ENCODE measurements at regions of chr2 and their contacts with region 1.

Region 1: GRCh38 chr2:30336978-30337841 is 105.9 kb downstream of the LBH start:
- DNase-seq: peak; percentile 87
- CTCF ChIP-seq: no peak

Region 2: GRCh38 chr2:30325600-30326328 is 11.4 kb before region 1 on chr2:
- CTCF ChIA-PET with region 1: interaction called, 15 read pairs
- POLR2A ChIA-PET with region 1: interaction called, 9 read pairs
- DNase-seq: no peak
- CTCF ChIP-seq: no peak

Region 3: GRCh38 chr2:30398084-30398873 is 61.1 kb after region 1 on chr2:
- CTCF ChIA-PET with region 1: no interaction called
- POLR2A ChIA-PET with region 1: no interaction called
- DNase-seq: no peak
- CTCF ChIP-seq: no peak

Region 4: DNA sequence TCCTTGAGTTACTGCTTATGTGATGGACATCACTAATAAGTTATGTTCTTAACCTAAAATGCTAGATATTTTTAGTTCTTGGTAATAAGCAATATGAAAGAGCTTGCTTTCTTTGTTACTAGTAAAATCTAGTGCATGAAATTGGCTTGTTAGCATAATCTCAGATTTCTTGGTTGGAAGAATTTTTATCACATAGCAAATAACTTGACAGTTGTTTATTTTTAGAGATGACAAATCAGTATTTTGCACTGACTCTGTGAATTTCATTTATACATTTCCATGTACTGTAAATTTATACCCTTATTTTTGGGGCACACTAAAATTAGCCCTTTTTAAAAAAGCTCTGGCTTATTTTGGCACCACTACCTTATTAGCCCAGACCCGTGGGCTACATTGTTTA is 155.4 kb after region 1 on chr2:
- CTCF ChIA-PET with region 1: no interaction called
- POLR2A ChIA-PET with region 1: no interaction called
- DNase-seq: no peak
- CTCF ChIP-seq: no peak